ENCODE measurements at regions of chr20 and their contacts with region 1.

Region 1: DNA sequence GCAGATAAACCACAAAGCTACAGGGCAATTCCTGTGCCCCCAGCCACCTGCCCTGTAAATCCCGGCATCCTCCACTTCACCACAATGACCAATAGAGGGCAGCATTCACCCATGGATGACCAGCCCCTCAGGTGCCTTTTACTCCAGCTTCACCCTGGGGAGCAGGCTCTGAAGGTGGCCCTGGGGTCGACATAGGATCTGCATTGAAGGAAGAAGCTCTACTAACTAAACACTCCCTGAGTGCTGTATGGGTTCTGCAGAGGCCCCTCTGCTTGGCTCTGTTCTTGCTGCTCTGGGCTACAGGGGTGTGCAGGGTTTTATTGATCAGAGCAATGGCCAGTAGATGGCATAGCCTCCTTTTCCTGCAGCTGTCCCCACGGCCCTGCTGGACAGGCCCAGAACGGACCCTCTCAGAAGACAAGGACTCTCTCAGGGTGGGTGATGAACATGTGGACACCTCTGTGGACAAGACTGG is 20.3 kb downstream of the CST4 start:
- DNase-seq: peak; percentile 84 to 87
- H3K4me3 ChIP-seq: no peak overlapping the region
- H3K4me3 Mint-ChIP-seq: no peak overlapping the region
- H3K27ac Mint-ChIP-seq: no peak overlapping the region
- H3K4me1 ChIP-seq: peaks cover 20% of the 10 kb centered on the region
- H3K4me1 Mint-ChIP-seq: peaks cover 16% of the 10 kb centered on the region
- H3K27me3 ChIP-seq: no peaks in the 10 kb centered on the region
- H3K27me3 Mint-ChIP-seq: no peaks in the 10 kb centered on the region
- CTCF ChIP-seq: peak; percentile 75 to 97

Region 2: DNA sequence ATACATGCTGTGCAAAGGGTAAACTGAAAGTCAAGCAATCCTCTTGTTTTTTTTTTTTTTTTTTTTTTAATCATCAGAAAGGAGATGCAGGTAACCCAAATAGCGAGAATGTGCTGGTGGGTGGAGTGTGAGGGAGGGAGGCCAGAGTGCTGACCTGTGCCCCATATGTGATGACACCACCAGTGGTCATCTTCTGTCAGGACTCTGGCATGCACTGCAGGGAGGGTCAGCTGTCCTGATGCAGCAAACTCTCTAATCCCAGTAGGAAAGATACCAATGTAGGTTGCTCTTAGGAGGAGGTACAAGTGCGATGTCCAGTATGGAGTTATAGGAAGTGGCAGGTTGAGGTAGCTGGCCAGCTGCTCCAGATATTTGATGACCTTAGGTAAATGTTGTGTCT is 23.1 kb after region 1 on chr20:
- CTCF ChIA-PET with region 1: interaction called, 10 read pairs
- POLR2A ChIA-PET with region 1: interaction called, 3 read pairs
- intact Hi-C with region 1: loop called (anchors 2 kb)
- DNase-seq: no peak
- H3K4me3 ChIP-seq: no peak overlapping the region
- H3K4me3 Mint-ChIP-seq: no peak overlapping the region
- H3K27ac Mint-ChIP-seq: peak overlapping the region; percentile 17
- H3K4me1 ChIP-seq: peaks cover 41% of the 10 kb centered on the region
- H3K4me1 Mint-ChIP-seq: peaks cover 41% of the 10 kb centered on the region
- H3K27me3 ChIP-seq: no peaks in the 10 kb centered on the region
- H3K27me3 Mint-ChIP-seq: no peaks in the 10 kb centered on the region
- CTCF ChIP-seq: no peak

Region 3: DNA sequence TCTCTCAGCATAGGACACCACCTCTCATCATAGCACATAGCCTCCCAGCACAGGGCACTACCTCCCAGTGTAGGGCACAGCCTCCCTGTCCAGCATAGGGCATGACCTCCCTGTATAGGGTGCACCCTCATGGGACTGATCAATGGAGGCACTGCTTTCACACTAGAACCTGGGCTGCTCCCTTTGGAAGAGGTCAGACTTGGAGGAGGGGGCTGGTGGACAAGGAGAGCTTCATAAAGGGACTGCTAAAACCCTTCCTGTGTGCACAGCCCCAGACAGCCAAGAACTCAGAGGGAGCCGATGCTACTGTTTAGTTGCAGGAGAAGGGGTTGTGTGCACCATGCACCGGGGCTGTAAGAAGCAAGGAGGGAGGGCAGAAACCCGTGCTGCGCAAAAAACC is 42.3 kb after region 1 on chr20:
- CTCF ChIA-PET with region 1: no interaction called
- POLR2A ChIA-PET with region 1: no interaction called
- intact Hi-C with region 1: no loop called
- DNase-seq: no peak
- H3K4me3 ChIP-seq: no peak overlapping the region
- H3K4me3 Mint-ChIP-seq: no peak overlapping the region
- H3K27ac Mint-ChIP-seq: no peak overlapping the region
- H3K4me1 ChIP-seq: no peaks in the 10 kb centered on the region
- H3K4me1 Mint-ChIP-seq: no peaks in the 10 kb centered on the region
- H3K27me3 ChIP-seq: no peaks in the 10 kb centered on the region
- H3K27me3 Mint-ChIP-seq: no peaks in the 10 kb centered on the region
- CTCF ChIP-seq: no peak

Region 4: GRCh38 chr20:23753589-23753988 is 85.1 kb after region 1 on chr20:
- CTCF ChIA-PET with region 1: no interaction called
- POLR2A ChIA-PET with region 1: no interaction called
- intact Hi-C with region 1: loop called (anchors 10 kb)
- DNase-seq: no peak
- H3K4me3 ChIP-seq: no peak overlapping the region
- H3K4me3 Mint-ChIP-seq: no peak overlapping the region
- H3K27ac Mint-ChIP-seq: peak overlapping the region; percentile 84
- H3K4me1 ChIP-seq: peaks cover 46% of the 10 kb centered on the region
- H3K4me1 Mint-ChIP-seq: peaks cover 47% of the 10 kb centered on the region
- H3K27me3 ChIP-seq: no peaks in the 10 kb centered on the region
- H3K27me3 Mint-ChIP-seq: no peaks in the 10 kb centered on the region
- CTCF ChIP-seq: no peak

Region 5: DNA sequence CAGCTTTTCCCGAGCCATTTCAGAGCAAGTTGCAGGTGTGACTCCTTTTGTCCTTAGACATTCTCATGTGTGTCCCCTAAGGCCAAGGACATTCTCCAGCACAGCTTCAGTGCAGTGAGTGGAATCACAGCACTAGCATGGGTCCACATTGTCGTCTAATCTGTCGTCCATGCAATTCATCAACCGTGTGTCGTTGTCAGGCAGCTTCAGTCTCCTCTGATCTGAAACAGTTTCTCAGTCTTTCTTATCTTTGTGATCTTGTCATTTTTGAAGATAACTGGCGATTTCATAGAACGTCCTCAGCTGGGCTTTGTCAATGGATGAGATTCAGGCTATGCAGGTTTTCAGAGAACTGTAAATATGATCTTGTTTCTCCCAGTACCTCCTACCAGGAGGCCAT is 126.3 kb after region 1 on chr20:
- CTCF ChIA-PET with region 1: interaction called, 7 read pairs
- POLR2A ChIA-PET with region 1: no interaction called
- intact Hi-C with region 1: loop called (anchors 1 kb)
- DNase-seq: peak; percentile 51 to 68
- H3K4me3 ChIP-seq: no peak overlapping the region
- H3K4me3 Mint-ChIP-seq: no peak overlapping the region
- H3K27ac Mint-ChIP-seq: no peak overlapping the region
- H3K4me1 ChIP-seq: peaks cover 9% of the 10 kb centered on the region; the same call in 1 of the 2 replicates
- H3K4me1 Mint-ChIP-seq: peaks cover 14% of the 10 kb centered on the region
- H3K27me3 ChIP-seq: no peaks in the 10 kb centered on the region
- H3K27me3 Mint-ChIP-seq: peaks cover 4% of the 10 kb centered on the region
- CTCF ChIP-seq: no peak

Region 6: DNA sequence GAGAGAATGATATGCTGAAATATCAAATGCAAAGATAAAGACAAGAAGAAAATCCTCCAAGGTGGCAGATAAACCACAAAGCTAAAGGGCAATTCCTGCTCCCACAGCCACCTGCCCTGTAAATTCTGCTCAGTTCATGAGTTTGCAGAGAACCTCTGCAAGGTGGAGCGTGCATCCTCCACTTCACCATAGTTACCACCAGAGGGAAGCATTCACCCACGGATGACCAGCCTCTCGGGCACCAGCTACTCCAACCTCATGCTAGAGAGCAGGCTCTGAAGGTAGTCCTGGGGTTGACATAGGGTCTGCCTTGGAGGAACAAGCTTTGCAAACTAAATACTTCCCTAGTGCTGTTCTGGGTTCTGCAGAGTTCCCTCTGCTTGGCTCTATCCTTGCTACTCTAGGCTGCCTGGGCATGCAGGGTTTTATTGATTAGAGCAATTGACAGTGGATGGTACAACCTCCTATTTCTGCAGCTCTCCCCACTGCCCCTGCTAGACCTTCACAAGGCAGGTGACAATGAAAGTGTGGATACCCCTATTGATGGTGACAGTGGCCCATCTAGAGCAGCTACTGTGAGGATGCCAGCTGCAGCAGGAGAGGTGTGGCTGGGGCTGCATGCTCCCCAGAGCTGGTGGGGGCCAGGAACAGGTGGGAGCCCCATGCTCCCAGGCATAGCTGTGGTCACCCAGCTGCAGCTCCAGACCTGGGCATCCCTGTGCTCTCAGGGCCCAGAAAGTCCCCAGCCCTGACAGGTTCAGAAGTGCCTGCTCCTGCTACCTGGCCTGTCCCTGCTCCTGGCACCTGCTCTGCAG is 269.0 kb after region 1 on chr20:
- CTCF ChIA-PET with region 1: interaction called, 10 read pairs
- POLR2A ChIA-PET with region 1: no interaction called
- intact Hi-C with region 1: loop called (anchors 2 kb)
- DNase-seq: peak; percentile 76 to 79
- H3K4me3 ChIP-seq: no peak overlapping the region
- H3K4me3 Mint-ChIP-seq: no peak overlapping the region
- H3K27ac Mint-ChIP-seq: no peak overlapping the region
- H3K4me1 ChIP-seq: no peaks in the 10 kb centered on the region
- H3K4me1 Mint-ChIP-seq: no peaks in the 10 kb centered on the region
- H3K27me3 ChIP-seq: no peaks in the 10 kb centered on the region
- H3K27me3 Mint-ChIP-seq: peaks cover 6% of the 10 kb centered on the region
- CTCF ChIP-seq: peak; percentile 83 to 90

Measured in Caco-2 (cell line).